Aorta (tissue), 5 donors: ENCODE measurements at regions of chr17 and their contacts with region 1.

Region 1: DNA sequence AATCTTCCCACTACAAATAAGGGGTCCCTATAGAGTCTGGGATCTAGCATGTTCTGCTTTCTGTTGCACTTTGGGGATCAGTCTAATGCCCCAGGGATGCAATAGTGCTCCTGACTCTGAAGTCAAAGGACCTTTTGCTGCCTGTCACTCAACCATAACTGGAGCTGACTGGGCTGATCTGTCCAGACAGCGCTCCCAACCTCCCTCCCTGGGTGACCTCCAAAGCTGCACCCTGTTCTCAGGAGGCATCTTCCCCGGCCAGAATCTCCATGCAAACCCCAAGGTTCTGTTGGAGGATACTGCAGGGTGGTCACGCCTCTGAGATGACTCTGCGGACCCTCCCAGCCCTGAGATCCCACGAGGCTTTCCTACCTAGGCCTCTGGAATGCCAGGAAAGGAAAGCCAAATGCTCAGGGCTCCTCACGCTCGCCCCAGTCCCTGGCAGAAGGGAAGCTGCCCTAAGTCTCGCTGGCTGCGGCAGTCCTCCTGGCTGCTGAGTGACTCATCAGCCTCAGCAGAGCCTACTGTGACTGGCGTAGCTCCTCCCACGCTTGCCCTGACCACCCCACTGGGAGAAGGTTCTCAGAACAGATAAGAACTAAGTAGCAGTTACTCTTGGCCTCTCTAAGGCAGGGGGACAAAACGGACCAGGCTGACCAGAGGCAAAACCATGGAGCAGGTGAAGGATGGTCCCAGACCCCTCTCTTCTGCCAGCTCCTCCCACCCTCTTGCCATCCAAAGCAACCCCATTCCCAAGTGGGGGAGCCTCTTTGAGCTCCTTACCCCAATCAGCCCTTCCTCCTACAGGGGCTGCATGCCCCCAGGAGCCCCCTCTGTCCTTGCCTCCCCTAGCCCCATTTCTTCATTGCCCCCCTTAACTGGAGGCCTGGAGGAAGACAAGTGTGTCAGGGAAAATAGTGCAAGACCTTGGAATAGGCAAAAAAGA is 124.1 kb upstream of the TNRC6C start:
- DNase-seq: peak; percentile 90 to 92
- ATAC-seq: peak; percentile 55
- H3K4me3 ChIP-seq: no peak overlapping the region
- H3K27ac ChIP-seq: peak overlapping the region in 1 of 2 donors; percentile 43
- H3K4me1 ChIP-seq: no peaks in the 10 kb centered on the region
- H3K27me3 ChIP-seq: no peaks in the 10 kb centered on the region

Region 2: DNA sequence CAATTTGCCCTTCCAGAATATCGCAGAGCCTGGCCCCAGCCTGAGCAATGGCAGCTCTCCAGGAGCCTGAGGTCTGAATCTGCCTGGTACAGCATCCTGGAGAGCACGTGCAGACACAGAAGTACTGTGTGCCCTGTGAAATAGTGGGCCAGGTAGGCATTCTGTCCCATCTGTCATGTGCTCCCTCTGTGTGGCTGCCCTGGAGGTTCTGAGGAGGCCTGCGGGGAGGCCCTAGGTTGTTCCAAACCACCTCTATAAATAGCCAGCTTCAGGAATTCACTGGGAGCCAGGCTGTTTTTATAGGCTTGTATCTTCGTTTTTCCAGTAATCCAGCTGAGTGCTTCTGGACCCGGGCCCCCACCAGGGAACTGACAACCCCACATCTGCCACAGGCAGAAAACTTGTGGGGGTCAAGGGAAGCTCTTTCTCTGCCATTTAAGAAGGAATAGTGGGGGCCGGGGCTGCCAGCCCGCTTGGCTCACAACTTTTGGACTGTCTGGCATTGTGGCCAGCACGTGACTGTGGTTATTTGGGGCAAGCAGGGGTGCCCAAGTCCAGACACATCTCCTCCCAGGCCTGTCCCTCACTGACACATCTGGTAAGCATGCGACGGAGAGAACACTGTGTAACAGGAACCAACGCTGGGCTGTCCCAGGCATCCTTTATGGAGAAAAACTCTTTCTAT is 232.2 kb before region 1 on chr17:
- intact Hi-C with region 1: loop called in 1 of 2 experiments (anchors 5 kb)
- DNase-seq: peak; percentile 89 to 93
- ATAC-seq: peak; percentile 93
- H3K4me3 ChIP-seq: no peak overlapping the region
- H3K27ac ChIP-seq: peak overlapping the region; percentile 68 to 99
- H3K4me1 ChIP-seq: peaks cover 3 to 5% of the 10 kb centered on the region in 2 donors
- H3K27me3 ChIP-seq: no peaks in the 10 kb centered on the region

Region 3: GRCh38 chr17:77810536-77810935 is 23.9 kb before region 1 on chr17:
- intact Hi-C with region 1: loop called in 1 of 2 experiments (anchors 2 kb)
- DNase-seq: peak; percentile 71 to 75
- ATAC-seq: peak; percentile 84
- H3K4me3 ChIP-seq: no peak overlapping the region
- H3K27ac ChIP-seq: peak overlapping the region in 1 of 2 donors; percentile 60
- H3K4me1 ChIP-seq: peaks cover 7 to 10% of the 10 kb centered on the region in 2 donors
- H3K27me3 ChIP-seq: no peaks in the 10 kb centered on the region

Region 4: DNA sequence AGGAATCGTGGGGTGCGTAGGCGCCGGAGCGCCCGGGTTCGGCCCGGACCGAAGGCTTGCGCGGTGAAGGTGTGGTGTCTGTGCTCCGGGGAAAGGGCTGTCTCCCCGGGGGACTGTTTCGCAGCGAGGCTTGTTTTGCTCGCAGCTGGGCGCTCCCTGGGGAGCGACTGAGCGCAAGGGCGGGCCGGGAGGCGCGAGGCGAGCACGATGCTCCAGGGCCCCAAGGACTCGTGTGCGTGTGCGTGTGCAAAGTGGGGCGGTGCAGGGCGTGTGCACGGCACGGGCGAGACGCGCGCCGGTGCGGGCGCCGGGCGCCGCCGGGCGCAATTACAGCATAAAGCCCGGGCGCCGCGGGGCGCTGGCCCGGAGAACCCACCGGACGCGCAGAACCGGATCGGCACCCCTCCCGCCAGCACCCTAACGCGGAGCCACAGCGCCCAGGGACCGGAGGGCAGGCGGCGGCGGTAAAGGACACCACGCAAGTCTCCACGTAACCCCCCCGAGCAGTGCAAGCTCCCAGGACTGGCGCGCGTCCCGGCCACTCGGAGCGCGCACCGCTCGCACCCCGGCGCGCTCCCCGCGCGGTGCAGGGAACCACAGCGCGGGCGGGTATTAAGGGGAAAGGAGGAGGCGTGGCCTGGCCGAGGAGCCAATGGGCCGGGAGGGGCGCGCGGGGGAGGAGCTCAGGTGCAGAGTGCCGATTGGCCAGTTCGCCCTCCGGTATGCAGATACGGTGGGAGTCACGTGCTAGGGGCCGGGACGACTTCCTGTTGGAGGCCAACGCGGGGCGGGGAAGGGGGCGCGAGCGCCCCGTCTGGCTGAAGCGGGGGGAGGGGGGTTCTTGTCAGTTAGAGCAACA is 123.6 kb after region 1 on chr17 and contains the start of gene TNRC6C:
- intact Hi-C with region 1: loop called in 1 of 2 experiments (anchors 5 kb)
- DNase-seq: peak; percentile 100
- ATAC-seq: peak; percentile 99
- H3K4me3 ChIP-seq: peak within 1 kb of the TSS; percentile 98 to 99
- H3K27ac ChIP-seq: peak within 1 kb of the TSS; percentile 91 to 95
- H3K4me1 ChIP-seq: peaks cover 2 to 9% of the 10 kb centered on the region in 2 donors
- H3K27me3 ChIP-seq: no peaks in the 10 kb centered on the region
- total RNA-seq, gene TNRC6C: 45.7 to 62.2 TPM